ENCODE measurements at regions of chr5 and their contacts with region 1.

Region 1: GRCh38 chr5:119009131-119009530 is 20.8 kb upstream of the DTWD2 start:
- DNase-seq: no peak
- CTCF ChIP-seq: no peak

Region 2: GRCh38 chr5:119022017-119022745 is 13.1 kb after region 1 on chr5:
- CTCF ChIA-PET with region 1: interaction called, 15 read pairs
- POLR2A ChIA-PET with region 1: no interaction called
- DNase-seq: peak; percentile 38
- CTCF ChIP-seq: peak; percentile 48

Region 3: DNA sequence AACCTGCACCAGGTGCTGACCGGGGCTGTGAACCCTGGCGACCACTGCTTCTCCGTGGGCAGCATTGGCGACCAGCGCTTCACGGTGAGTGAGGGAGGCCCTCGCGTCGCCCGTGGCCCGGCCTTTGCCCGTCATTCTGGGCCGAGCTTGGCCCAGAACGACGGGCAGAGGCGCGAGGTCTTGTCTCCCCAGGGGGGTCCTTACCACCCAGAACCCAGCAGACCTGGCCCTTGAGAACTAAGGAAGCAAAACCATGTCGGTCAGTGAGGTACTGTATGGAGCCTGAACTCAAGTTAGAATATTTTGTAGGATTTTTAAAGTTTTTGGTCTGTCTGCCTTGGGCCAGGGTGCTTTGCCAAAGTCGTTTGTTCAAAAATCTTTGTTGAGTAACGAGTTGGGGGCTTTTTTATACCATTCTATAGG is 62.5 kb after region 1 on chr5:
- CTCF ChIA-PET with region 1: no interaction called
- POLR2A ChIA-PET with region 1: no interaction called
- DNase-seq: no peak
- CTCF ChIP-seq: no peak

Region 4: DNA sequence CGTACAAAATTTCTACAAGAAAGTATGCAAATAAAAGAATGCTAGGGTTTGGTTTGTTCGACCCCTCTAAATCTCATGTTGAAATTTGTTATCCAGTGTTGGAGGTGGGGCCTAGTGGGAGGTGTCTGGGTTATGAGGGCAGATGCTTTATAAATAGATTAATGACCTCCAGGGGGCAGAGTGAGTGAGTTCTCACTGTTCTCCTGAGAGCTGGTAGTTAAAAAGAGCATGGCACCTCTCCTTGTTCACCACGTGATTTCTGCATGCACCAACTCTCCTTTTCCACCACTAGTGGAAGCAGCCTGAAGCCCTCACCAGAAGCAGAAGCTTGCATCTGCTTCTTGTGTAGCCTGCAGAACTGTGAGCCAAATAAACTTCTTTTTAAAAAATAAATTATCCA is 569.8 kb after region 1 on chr5:
- CTCF ChIA-PET with region 1: no interaction called
- POLR2A ChIA-PET with region 1: no interaction called
- DNase-seq: peak; percentile 14
- CTCF ChIP-seq: no peak

Measured in GM10248 (cell line).